ENCODE measurements at regions of chr15 and their contacts with region 1.

Region 1: DNA sequence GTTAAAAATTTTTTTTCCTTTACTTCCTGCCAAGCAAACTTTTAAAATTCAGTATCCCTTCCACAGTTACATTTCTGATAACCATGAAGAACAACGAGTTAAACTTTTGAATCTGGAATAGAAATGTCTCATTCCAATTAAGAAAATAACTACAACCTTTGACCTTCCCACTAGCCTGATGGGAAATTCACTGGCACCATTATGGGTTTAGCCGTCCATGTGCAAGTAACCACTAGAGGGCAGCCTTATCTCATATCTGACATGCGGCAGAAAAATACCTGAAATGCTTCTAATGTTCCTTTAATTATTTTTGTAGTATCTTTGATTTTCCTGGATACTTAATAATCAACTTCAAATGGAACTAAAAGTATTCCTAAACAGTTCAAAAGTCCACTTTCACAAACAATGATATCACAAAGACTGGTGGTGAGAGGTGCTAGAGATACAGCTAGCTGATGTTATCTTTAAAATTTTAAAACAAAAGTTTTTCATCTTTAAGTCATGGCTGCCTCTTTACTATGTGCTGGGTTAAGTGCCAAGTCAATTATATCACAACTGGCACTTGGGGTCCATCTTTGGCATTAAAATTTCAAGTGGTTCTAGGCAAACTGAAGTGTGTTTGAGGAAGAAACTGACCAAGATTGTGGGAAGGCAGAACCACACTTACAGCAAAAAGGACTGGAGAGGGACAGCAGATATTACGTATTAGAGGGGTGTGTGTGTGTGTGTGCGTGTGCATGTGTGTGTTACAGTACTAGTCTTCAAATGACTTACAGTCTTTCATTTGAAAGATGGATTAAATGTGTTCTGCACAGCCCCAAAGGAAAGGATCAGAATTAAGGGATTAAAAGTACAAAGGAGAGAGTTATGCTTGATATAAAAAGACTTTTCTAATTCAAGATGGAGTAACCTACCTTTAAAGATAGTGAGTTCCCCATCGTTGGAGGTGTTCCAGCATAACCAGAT is 107.1 kb upstream of the ICE2 start:
- DNase-seq: peak; percentile 51
- H3K4me3 Mint-ChIP-seq: peak overlapping the region; percentile 74
- H3K27ac Mint-ChIP-seq: peak overlapping the region; percentile 92
- H3K4me1 Mint-ChIP-seq: peaks cover 91% of the 10 kb centered on the region
- H3K27me3 Mint-ChIP-seq: no peaks in the 10 kb centered on the region

Region 2: DNA sequence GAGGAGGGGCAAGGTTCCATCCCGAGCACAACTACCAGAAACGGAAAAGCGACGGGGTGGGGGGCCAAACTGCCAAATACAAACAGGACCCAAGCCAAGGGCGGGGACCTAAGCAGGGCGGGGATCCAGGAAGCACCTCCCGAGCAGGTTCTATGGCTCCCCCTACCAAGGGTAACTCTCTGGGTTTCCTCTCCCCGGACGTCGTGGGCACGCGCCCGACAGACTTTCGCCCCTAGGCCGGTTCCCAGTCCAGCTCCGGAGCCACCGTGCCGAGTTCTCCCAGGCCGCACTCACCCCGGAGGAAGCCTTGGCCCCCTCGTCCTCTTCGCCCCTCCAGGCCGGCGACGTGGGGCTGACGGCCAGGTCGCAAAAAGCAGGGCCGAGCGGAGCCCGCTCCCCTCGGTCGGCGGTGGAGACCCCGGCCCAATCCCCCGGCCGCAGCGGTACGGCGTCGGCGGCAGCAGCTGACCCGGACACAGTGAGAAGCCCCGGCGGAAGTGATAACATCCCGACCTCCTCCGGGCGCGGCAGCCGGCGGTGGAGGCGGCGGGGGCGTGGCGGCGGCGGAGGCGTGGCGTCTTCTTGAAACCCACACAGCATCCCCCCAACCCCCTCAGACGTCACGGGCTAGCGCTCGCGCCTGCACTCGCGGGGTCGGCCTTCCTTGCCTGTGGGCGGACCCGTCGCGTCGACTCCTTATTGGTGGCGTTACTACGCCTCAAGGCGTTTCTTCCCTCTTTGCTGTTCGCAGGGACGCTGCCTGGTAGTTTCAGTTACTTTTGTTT is 897.0 kb before region 1 on chr15 and contains the start of gene BNIP2:
- intact Hi-C with region 1: loop called (anchors 5 kb)
- DNase-seq: peak; percentile 99
- H3K4me3 Mint-ChIP-seq: peak within 1 kb of the TSS; percentile 90
- H3K27ac Mint-ChIP-seq: peak within 1 kb of the TSS; percentile 91
- H3K4me1 Mint-ChIP-seq: peaks cover 41% of the 10 kb centered on the region
- H3K27me3 Mint-ChIP-seq: no peaks in the 10 kb centered on the region
- total RNA-seq, gene BNIP2: 63.5 and 64.6 TPM in 2 replicates

Region 3: GRCh38 chr15:60520825-60521368 is 65.1 kb before region 1 on chr15:
- intact Hi-C with region 1: loop called (anchors 1 kb)
- DNase-seq: peak; percentile 63
- H3K4me3 Mint-ChIP-seq: no peak overlapping the region
- H3K27ac Mint-ChIP-seq: peak overlapping the region; percentile 71
- H3K4me1 Mint-ChIP-seq: peaks cover 58% of the 10 kb centered on the region
- H3K27me3 Mint-ChIP-seq: no peaks in the 10 kb centered on the region

Region 4: GRCh38 chr15:60568301-60568742 is 17.7 kb before region 1 on chr15:
- intact Hi-C with region 1: loop called (anchors 2 kb)
- DNase-seq: no peak
- H3K4me3 Mint-ChIP-seq: peak overlapping the region; percentile 69
- H3K27ac Mint-ChIP-seq: peak overlapping the region; percentile 82
- H3K4me1 Mint-ChIP-seq: peaks cover 92% of the 10 kb centered on the region
- H3K27me3 Mint-ChIP-seq: no peaks in the 10 kb centered on the region

Region 5: GRCh38 chr15:60720493-60721256 is 134.6 kb after region 1 on chr15:
- intact Hi-C with region 1: loop called (anchors 1 kb)
- DNase-seq: peak; percentile 56
- H3K4me3 Mint-ChIP-seq: peak overlapping the region; percentile 59
- H3K27ac Mint-ChIP-seq: peak overlapping the region; percentile 88
- H3K4me1 Mint-ChIP-seq: peaks cover 80% of the 10 kb centered on the region
- H3K27me3 Mint-ChIP-seq: no peaks in the 10 kb centered on the region

Region 6: DNA sequence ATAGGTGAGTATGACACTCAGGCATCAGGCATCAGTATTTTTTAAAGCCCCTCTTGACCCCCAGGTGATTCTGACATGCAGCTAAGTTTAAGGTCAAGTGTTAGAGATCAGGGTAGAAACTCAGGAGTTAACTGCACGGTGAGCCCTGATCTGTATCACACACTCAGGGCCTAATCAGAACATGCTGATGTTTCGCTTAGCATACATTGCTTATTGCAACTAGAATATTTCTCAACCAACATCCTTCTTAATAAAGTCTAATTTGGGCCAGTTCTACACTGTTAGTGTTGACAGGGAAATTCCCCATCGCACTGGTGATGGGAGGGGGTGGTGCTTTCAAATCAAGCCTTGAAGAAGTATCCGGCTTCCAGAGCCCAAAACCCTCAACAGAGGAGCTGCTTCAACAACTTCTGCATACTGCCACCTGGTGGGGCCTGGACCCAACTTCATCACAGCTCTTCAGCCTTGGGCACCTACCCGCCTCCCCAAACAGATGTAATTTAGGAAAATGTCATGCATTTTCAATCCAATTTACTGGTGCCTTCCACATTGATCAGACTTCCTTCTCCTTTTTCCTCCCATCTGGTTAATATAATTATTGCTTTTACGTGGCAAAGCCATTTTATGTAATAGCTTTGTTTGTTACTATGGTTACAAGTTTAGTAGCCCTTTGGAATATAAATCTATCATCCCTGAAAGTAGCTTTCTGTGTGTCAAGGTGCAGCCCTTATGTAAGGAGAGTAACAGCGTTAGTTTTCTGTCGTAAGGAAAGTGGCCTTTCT is 330.8 kb after region 1 on chr15:
- intact Hi-C with region 1: loop called (anchors 1 kb)
- DNase-seq: peak; percentile 80
- H3K4me3 Mint-ChIP-seq: peak overlapping the region; percentile 17
- H3K27ac Mint-ChIP-seq: peak overlapping the region; percentile 64
- H3K4me1 Mint-ChIP-seq: peaks cover 32% of the 10 kb centered on the region
- H3K27me3 Mint-ChIP-seq: peaks cover 2% of the 10 kb centered on the region